ENCODE measurements at regions of chr3 and their contacts with region 1.

Region 1: DNA sequence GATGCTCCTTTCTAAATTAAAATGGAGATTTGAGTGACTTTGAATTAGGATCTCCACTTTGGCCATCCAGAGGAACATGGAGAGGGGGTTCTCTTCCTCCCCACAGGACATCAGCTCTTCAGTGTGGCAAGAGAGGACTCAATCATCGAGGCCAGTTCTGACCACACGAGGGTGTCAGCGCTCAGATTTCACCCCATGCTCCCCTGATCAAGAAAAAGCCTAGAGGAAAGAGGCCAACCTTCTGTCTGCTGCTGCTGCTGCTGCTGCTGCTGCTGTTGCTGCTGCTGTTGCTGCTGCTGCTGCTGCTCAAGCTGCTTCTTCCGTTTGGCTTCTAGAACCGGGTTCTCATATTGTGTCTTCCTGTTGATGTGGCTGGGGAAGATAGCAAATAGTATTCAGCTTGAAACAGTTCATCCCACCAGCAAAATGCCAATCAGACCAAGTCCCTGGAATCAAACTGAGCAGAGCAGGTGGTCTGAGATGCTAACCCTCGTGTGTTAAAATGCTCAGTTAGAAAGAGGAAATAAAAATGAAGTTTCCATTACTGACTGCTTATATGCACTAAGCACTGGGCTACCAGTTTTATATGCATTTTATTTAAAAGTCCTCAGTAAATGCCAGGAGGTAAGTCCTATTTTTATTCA is 599.0 kb downstream of the MAGI1 start:
- DNase-seq: peak; percentile 37 to 46
- H3K4me3 ChIP-seq: no peak overlapping the region
- H3K27ac ChIP-seq: no peak overlapping the region
- H3K4me1 ChIP-seq: no peaks in the 10 kb centered on the region
- H3K27me3 ChIP-seq: no peaks in the 10 kb centered on the region
- CTCF ChIP-seq: peak; percentile 59

Region 2: DNA sequence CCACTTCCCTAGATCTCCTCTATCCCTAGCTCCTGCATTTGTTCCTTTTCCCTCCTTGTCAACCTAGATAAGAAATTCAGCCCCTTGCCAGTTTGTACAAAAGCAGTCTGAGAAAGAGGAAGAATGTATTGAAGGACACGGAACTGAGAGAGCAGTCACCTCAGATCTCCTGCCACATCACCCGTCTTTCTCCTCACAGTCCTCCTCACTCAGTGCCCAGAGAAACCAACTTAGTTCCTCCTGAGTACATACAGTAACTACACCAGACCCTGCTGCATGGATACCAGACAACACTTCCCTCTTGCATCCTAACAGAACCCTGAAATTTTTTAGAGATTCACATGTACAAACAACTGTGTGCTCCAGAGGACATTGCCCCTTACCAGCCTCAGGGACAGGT is 188.4 kb before region 1 on chr3:
- CTCF ChIA-PET with region 1: no interaction called
- POLR2A ChIA-PET with region 1: no interaction called
- intact Hi-C with region 1: no loop called
- DNase-seq: no peak
- H3K4me3 ChIP-seq: no peak overlapping the region
- H3K27ac ChIP-seq: no peak overlapping the region
- H3K4me1 ChIP-seq: no peaks in the 10 kb centered on the region
- H3K27me3 ChIP-seq: no peaks in the 10 kb centered on the region
- CTCF ChIP-seq: no peak

Region 3: GRCh38 chr3:65672871-65673815 is 233.4 kb after region 1 on chr3:
- CTCF ChIA-PET with region 1: no interaction called
- POLR2A ChIA-PET with region 1: no interaction called
- intact Hi-C with region 1: loop called (anchors 2 kb)
- DNase-seq: peak in 1 of 2 experiments; percentile 43
- H3K4me3 ChIP-seq: no peak overlapping the region
- H3K27ac ChIP-seq: no peak overlapping the region
- H3K4me1 ChIP-seq: no peaks in the 10 kb centered on the region
- H3K27me3 ChIP-seq: no peaks in the 10 kb centered on the region
- CTCF ChIP-seq: peak; percentile 70

Region 4: DNA sequence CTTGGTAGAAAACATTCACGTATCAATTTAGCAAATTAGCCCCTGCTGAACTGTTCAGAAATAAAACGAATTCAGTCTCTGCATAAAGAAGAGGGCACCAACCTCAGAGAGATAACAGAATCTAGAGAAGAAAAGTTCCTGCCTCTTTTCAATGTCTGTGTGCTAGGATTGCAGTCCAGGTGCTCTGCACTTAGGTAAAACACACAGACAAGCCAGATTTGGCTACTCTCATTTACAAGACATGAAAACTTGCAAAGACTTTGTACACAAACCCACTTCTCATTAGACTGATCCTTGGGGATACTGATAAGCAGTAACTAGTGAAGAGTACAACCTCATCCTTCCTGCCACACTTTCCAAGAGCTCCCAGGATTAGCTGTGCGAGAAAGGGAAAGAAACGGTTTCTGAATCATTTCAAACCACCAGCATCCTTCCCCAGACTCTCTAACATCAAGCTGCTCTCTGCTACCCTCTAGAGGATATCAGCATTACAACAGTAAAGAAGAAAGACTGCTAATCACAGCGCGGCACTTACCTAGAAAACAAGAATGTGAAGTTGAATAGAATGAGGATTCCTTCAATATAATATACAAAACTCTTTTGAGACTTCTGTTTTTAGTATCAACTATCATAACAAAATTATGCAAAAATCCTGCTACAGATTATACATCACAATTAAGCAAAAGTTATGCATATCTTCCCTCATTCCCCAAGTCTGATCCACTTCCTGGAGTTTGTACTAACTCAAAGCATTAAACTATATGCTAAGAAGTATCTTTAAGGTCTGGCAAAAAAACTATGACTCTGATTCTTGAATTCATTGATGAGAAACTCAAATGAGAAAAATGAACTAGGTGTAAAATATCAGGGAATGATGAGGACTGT is 292.5 kb after region 1 on chr3:
- CTCF ChIA-PET with region 1: interaction called, 3 read pairs
- POLR2A ChIA-PET with region 1: no interaction called
- intact Hi-C with region 1: loop called (anchors 5 kb)
- DNase-seq: peak; percentile 16 to 40
- H3K4me3 ChIP-seq: no peak overlapping the region
- H3K27ac ChIP-seq: no peak overlapping the region
- H3K4me1 ChIP-seq: no peaks in the 10 kb centered on the region
- H3K27me3 ChIP-seq: no peaks in the 10 kb centered on the region
- CTCF ChIP-seq: peak; percentile 73

Region 5: GRCh38 chr3:66195347-66195783 is 755.6 kb after region 1 on chr3:
- CTCF ChIA-PET with region 1: no interaction called
- POLR2A ChIA-PET with region 1: no interaction called
- intact Hi-C with region 1: loop called (anchors 2 kb)
- DNase-seq: peak; percentile 41 to 55
- H3K4me3 ChIP-seq: peak overlapping the region; percentile 66
- H3K27ac ChIP-seq: no peak overlapping the region
- H3K4me1 ChIP-seq: no peaks in the 10 kb centered on the region; the same call in 1 of the 2 replicates
- H3K27me3 ChIP-seq: no peaks in the 10 kb centered on the region
- CTCF ChIP-seq: no peak; the same call in 1 of the 2 replicates

Measured in PC-9 (cell line).